ENCODE measurements at regions of chr1 and their contacts with region 1.

Region 1: DNA sequence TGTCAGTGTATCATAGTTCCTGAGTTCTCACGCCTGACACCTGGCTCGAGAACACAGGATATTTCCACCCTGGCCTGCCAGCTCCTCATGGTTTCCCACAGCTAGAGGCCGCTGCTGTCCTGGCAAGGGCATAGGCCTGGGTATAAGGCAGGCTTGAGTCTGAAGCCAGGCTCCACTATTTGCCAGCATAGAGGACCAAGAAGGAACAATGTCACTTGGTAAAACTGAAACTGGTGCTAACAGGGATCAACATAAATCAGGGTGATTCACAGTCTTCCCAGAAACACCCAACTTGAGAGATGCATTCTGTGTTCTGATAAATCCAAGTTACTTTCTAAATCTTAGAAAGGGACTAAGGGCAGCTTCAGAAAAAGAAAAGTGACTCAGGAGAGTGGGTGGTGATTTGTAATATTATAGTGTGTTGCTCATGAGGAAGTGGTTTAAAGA is 6.9 kb upstream of the S100A2 start:
- DNase-seq: peak; percentile 73
- ATAC-seq: peak; percentile 77
- H3K4me3 Mint-ChIP-seq: no peak overlapping the region
- H3K27ac Mint-ChIP-seq: no peak overlapping the region
- H3K4me1 Mint-ChIP-seq: peaks cover 17% of the 10 kb centered on the region
- H3K27me3 Mint-ChIP-seq: peaks cover 2% of the 10 kb centered on the region; the same call in 1 of the 2 replicates
- CTCF ChIP-seq: peak; percentile 30

Region 2: GRCh38 chr1:153510984-153511410 is 61.6 kb before region 1 on chr1:
- CTCF ChIA-PET with region 1: interaction called, 27 read pairs
- POLR2A ChIA-PET with region 1: no interaction called
- DNase-seq: peak; percentile 93
- ATAC-seq: peak; percentile 96
- H3K4me3 Mint-ChIP-seq: no peak overlapping the region
- H3K27ac Mint-ChIP-seq: no peak overlapping the region
- H3K4me1 Mint-ChIP-seq: peaks cover 5% of the 10 kb centered on the region; the same call in 1 of the 2 replicates
- H3K27me3 Mint-ChIP-seq: peaks cover 38% of the 10 kb centered on the region
- CTCF ChIP-seq: peak; percentile 81

Region 3: DNA sequence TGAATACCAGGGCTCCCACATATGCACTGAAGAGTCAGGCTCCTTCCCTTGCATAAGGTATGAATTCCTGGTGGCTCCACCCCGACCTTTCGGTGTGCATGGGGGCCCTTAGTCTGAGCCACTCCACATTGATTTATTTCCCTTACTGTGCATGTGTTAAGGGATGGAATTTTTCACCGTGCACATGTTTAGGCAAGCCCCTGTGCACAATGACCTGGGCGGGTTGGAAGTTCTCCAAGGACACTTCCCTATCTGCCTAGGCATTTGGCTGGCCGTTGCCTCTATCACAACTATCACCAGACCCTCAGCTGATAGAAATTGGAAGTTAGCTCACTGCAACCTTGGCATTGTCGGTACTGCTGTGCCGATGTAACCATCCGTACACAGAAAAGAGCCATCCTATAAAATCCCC is 46.5 kb before region 1 on chr1:
- CTCF ChIA-PET with region 1: interaction called, 188 read pairs
- POLR2A ChIA-PET with region 1: no interaction called
- DNase-seq: no peak
- ATAC-seq: no peak
- H3K4me3 Mint-ChIP-seq: no peak overlapping the region
- H3K27ac Mint-ChIP-seq: no peak overlapping the region
- H3K4me1 Mint-ChIP-seq: peaks cover 25% of the 10 kb centered on the region
- H3K27me3 Mint-ChIP-seq: peaks cover 10% of the 10 kb centered on the region
- CTCF ChIP-seq: no peak

Region 4: GRCh38 chr1:153545067-153546055 is 27.2 kb before region 1 on chr1 and contains the start of gene S100A4:
- CTCF ChIA-PET with region 1: interaction called, 188 read pairs
- POLR2A ChIA-PET with region 1: no interaction called
- DNase-seq: peak; percentile 88
- ATAC-seq: peak; percentile 89
- H3K4me3 Mint-ChIP-seq: peak within 1 kb of the TSS; percentile 64
- H3K27ac Mint-ChIP-seq: peak within 1 kb of the TSS; percentile 96
- H3K4me1 Mint-ChIP-seq: peaks cover 65% of the 10 kb centered on the region
- H3K27me3 Mint-ChIP-seq: no peaks in the 10 kb centered on the region; the same call in 1 of the 2 replicates
- CTCF ChIP-seq: no peak
- total RNA-seq, gene S100A4: 22.7 to 32.0 TPM (median 31.7 TPM) in 3 replicates

Region 5: GRCh38 chr1:153608742-153609584 is 36.4 kb after region 1 on chr1:
- CTCF ChIA-PET with region 1: interaction called, 64 read pairs
- POLR2A ChIA-PET with region 1: interaction called, 3 read pairs
- DNase-seq: peak; percentile 84
- ATAC-seq: peak; percentile 71
- H3K4me3 Mint-ChIP-seq: peak overlapping the region; percentile 29
- H3K27ac Mint-ChIP-seq: peak overlapping the region; percentile 90; the same call in 1 of the 2 replicates
- H3K4me1 Mint-ChIP-seq: peaks cover 64% of the 10 kb centered on the region
- H3K27me3 Mint-ChIP-seq: no peaks in the 10 kb centered on the region; the same call in 1 of the 2 replicates
- CTCF ChIP-seq: no peak

Region 6: DNA sequence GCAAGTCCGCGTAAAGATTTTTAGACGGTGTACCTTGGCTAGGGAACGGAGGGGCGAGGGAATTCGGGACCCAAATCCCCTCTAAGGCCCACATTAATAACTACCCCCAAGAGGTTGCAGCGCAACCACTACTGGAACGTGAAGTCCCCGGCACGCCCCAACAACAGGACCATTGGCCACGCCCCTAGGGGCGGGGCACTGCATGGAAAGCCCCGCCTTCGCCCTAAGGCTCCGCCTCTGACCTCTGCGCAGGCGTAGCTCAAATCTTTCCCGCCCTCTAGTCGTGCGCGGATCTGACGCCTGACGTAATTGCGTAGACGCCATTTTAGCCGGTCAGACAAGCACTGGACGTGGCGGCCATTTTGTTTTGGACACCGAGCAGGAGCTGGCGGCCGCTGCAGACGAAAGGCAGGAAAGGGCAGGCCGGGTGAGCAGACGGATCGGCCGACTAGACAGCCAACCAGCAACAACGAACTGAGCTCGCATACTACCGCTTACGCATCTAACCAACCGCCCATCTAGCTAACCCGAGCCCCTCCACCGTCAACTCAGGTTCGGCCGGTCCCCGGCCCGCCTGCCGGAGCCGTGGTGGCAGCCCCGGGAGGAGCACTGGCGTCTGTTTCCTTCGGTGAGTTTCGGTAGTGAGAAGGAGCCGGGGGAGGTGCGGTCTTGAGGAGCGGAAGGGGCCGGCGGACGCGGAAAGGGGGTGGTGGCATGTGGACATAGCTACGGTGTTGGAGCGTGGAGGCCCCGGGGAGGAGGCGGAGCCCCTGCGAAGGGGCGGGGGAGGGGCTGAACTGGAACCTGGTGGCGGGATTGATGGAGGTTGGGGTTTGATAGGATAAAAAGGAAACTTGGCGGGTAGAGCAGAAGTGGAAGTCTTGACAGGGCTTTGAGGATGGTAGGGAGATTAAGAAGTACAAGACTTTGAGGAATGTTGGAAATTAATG is 61.4 kb after region 1 on chr1 and contains the start of gene CHTOP:
- CTCF ChIA-PET with region 1: interaction called, 98 read pairs
- POLR2A ChIA-PET with region 1: interaction called, 10 read pairs
- DNase-seq: peak; percentile 98
- ATAC-seq: peak; percentile 92
- H3K4me3 Mint-ChIP-seq: peak within 1 kb of the TSS; percentile 86
- H3K27ac Mint-ChIP-seq: peak within 1 kb of the TSS; percentile 100
- H3K4me1 Mint-ChIP-seq: peaks cover 22% of the 10 kb centered on the region
- H3K27me3 Mint-ChIP-seq: no peaks in the 10 kb centered on the region
- CTCF ChIP-seq: no peak
- total RNA-seq, gene CHTOP: 101 to 105 TPM (median 104 TPM) in 3 replicates

Measured in WTC11 (cell line).